GM10248 (cell line): ENCODE measurements at regions of chr13 and their contacts with region 1.

Region 1: DNA sequence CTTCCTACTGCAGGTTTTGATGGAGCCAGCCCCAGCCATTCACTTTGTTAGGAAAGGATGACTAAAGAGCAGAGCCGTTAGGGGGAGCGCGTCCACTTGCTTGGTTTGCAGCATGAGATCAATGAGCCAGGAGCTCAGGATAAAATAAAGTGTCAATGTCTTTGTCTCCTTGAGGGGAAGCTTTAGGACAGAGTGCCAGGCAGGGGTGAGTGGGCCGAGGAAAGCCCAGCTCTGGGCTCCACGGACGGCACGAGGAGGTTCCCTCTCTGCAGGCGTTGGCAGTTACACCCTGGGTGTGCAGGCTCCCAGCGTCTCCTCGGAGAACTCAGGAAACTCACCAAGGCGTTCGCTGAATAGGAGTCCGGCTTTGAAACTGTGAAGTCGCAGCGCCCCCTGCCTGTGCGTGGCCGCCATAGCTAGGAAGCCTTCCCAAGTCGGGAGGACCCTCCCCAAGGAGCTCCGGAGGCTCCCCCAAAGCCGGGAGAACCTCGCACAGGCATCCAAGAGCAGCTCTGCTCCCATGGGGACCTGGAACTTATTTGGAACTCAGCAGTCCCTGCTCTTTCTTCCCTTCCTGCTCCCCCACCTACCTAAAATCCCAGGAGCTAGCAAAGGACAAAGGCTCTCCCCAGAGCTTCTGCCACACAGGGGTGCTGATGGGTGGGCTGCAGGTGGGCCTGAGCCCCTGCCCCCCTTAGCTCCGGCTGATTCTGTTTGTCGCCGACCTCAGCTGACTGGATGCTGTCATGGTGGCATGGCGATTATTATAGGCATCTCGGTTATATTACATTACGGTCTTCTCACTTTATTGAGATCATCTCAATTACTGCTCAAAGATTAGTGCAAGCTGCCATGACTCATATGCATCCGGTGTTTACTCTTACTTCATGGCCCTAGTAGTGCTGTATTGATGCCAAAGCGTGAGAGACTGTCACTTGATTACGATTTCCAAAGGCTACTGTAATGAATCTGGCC is 34.4 kb downstream of the GSX1 start:
- DNase-seq: peak; percentile 83
- CTCF ChIP-seq: peak; percentile 97

Region 2: DNA sequence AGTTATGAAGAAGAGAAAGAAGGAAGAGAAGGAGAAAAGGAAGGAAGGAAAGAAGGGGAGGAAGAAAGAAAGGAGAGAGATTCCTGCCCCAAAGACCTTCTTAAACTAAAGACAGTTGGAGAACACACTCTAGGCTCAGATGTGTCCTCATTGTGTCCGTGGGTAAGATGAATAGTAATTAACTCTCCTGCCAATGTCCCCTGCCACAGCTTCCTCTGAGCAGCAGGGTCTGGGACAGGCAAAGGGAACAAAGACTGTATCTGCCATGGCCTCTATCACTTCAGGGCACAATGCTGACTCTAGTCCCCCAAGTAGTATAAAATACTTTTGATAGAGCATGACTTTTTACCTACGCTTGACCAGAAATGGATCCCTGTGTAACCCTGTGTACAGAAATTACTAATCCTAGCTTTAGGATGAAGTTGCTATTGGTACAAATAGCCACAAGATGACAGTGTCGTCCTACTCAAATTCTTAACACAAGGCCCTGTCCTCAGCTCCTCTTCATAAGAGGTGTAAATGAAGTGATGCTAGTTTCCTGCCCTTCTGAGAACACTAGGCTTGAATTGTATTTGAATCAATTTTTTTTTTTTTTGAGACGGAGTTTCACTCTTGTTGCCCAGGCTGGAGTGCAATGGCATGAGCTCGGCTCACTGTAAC is 879.9 kb before region 1 on chr13:
- CTCF ChIA-PET with region 1: interaction called, 15 read pairs
- POLR2A ChIA-PET with region 1: no interaction called
- DNase-seq: peak; percentile 50
- CTCF ChIP-seq: peak; percentile 53

Region 3: DNA sequence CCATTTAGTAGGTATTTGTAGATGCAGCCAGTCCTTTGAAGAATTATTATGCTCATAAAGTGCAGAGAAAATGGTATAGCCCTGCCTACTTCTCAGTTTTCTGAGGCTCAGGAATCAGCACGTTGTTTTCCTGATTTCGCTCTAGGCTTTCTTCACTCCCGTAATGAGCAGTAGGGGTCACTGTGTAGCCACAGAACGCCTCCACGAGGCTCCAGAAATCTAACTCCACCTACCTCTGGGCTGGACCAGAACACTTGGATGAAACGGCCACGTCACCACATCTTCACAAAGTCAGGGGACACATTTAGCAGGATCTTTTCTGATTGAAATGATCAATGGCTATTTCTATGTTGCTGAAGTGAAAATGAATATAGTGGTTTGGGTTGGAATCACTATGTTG is 452.0 kb before region 1 on chr13:
- CTCF ChIA-PET with region 1: interaction called, 205 read pairs
- POLR2A ChIA-PET with region 1: no interaction called
- DNase-seq: peak; percentile 75
- CTCF ChIP-seq: peak; percentile 71

Region 4: DNA sequence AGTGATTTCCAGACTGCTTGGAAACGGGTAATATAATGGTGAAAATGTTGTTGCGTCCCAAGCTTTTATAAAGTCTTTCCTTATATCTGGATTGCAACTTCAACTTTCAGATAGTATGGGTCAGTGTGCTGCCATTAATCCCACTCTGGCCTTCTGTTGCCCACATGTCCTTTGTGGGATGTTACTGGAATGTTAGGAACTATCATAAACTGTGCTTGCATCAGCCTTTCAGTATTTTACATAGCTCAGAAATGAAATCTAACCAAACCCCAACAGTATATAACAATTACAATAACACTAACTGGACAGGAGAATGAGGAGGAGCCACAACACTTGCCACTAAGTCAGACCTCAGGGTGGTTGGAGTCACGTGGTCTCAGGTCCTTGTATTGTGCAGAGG is 285.3 kb before region 1 on chr13:
- CTCF ChIA-PET with region 1: interaction called, 26 read pairs
- POLR2A ChIA-PET with region 1: no interaction called
- DNase-seq: no peak
- CTCF ChIP-seq: no peak

Region 5: GRCh38 chr13:27808851-27809550 is 17.7 kb before region 1 on chr13:
- CTCF ChIA-PET with region 1: interaction called, 115 read pairs
- POLR2A ChIA-PET with region 1: no interaction called
- DNase-seq: no peak
- CTCF ChIP-seq: no peak

Region 6: GRCh38 chr13:27968316-27969081 is 141.8 kb after region 1 on chr13:
- CTCF ChIA-PET with region 1: interaction called, 50 read pairs
- POLR2A ChIA-PET with region 1: no interaction called
- DNase-seq: peak; percentile 18
- CTCF ChIP-seq: no peak